ENCODE measurements at regions of chr2 and their contacts with region 1.

Region 1: DNA sequence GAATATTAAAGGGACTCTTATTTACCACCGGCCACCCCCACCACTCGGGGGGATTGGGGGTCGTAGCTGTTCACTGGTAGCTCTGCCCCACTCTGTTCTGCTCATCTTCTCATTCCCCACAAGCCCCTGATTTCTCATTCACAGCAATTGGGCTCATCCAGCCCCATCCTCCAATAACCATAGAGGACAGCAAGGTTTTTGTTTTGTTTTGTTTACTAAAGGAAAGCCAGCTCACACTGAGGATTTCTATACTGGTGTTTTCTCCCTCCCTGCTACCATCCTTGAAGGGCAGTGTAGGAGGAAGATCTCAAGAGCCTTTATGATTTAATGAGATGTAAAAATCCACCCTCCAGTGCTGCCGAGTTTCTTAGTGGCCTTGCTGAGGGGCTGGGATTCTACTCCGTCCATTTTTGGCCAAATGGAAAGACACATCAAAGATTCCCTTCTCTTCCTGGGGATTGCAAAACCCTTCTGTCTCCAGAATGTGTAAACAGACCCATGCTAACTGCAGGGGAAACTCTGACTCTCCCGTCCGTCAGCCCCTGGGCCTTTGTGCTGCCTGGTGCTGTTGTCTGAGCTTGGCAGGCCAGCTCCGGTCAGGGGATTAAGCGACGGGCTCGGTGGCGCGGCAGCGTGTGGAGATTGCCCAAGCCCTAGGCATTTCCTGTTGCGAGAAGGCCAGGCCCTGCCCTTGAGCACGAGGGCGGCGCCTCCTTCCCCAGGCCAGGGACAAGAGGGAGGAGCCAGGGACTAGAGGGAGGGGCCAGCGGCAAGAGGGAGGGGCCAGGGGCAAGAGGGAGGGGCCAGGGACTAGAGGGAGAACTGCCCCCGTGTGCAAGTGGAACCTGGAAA is 165.0 kb downstream of the ANTXR1 start:
- DNase-seq: peak; percentile 71
- H3K4me3 ChIP-seq: no peak overlapping the region
- H3K27ac ChIP-seq: peak overlapping the region; percentile 48
- H3K4me1 ChIP-seq: peaks cover 26% of the 10 kb centered on the region
- H3K27me3 ChIP-seq: no peaks in the 10 kb centered on the region
- CTCF ChIP-seq: no peak

Region 2: DNA sequence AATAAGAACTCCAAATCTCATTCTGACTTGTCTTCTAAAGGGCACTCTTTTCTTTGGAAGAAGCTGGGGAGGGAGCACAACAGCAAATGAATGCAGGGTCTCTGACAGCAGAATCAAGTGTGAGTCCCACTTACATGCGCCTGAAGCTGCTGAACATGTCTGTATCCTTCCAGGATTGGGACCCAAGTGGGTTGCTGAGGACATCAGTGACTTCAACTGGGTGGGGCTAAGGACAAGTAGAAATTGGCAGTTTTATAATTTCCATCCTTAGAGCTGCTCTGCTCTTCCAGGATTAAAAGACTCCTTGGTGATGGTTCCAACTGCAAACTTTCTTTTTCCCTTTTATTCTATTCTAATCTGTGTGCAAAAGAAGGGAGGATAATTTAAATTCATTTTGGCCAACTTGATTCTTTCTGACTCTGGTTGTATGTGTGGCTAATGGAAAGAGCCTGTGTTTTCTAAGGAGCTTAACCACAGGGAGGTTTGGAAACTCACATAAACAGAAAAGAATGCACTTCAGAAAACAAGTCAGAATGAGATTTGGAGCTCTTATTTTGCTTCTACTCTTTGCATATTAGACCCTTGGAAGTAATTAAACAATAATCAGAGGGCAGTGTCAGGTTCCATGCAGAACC is 144.4 kb before region 1 on chr2:
- CTCF ChIA-PET with region 1: no interaction called
- dilution Hi-C with region 1: loop called (anchors 10 kb)
- in situ Hi-C with region 1: no loop called
- intact Hi-C with region 1: no loop called
- DNase-seq: no peak
- H3K4me3 ChIP-seq: no peak overlapping the region
- H3K27ac ChIP-seq: no peak overlapping the region
- H3K4me1 ChIP-seq: no peaks in the 10 kb centered on the region
- H3K27me3 ChIP-seq: no peaks in the 10 kb centered on the region
- CTCF ChIP-seq: no peak

Region 3: GRCh38 chr2:69082430-69082997 is 95.5 kb before region 1 on chr2:
- CTCF ChIA-PET with region 1: no interaction called
- dilution Hi-C with region 1: no loop called
- in situ Hi-C with region 1: no loop called
- intact Hi-C with region 1: no loop called
- DNase-seq: peak; percentile 47
- H3K4me3 ChIP-seq: no peak overlapping the region
- H3K27ac ChIP-seq: no peak overlapping the region
- H3K4me1 ChIP-seq: peaks cover 9% of the 10 kb centered on the region
- H3K27me3 ChIP-seq: no peaks in the 10 kb centered on the region
- CTCF ChIP-seq: no peak

Region 4: DNA sequence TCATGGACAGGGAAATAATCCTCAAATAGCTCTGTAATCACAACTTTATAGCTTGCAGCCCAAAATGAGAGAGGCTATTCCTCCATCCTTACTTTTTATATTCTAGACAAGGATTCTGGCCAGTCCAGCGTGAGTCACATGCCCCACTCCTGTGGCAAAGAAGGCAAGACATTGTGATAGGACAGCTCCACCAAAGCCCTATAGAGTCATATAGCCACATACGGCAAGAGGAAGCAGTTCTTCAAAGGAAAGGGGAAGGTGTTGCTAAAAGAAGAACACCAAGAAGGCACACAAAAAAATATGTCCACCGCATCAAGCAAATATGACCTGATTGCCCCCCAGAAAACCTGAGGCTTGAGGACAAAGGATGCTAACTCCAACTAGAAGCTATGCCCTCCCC is 212.5 kb after region 1 on chr2:
- CTCF ChIA-PET with region 1: no interaction called
- dilution Hi-C with region 1: no loop called
- in situ Hi-C with region 1: no loop called
- intact Hi-C with region 1: no loop called
- DNase-seq: no peak
- H3K4me3 ChIP-seq: no peak overlapping the region
- H3K27ac ChIP-seq: no peak overlapping the region
- H3K4me1 ChIP-seq: peaks cover 6% of the 10 kb centered on the region
- H3K27me3 ChIP-seq: no peaks in the 10 kb centered on the region
- CTCF ChIP-seq: no peak

Measured in mammary epithelial cell (primary cell).